Aorta (tissue), 5 donors: ENCODE measurements at regions of chr15 and their contacts with region 1.

Region 1: GRCh38 chr15:62389885-62390790 is 225.1 kb upstream of the C2CD4B start:
- DNase-seq: peak; percentile 81 to 91
- ATAC-seq: peak; percentile 92
- H3K4me3 ChIP-seq: peak within 1 kb of the TSS; percentile 55 to 85
- H3K27ac ChIP-seq: peak within 1 kb of the TSS; percentile 36 to 41
- H3K4me1 ChIP-seq: peaks cover 0 to 2% of the 10 kb centered on the region in 2 donors
- H3K27me3 ChIP-seq: no peaks in the 10 kb centered on the region

Region 2: GRCh38 chr15:62254137-62254934 is 135.8 kb before region 1 on chr15:
- intact Hi-C with region 1: no loop called
- DNase-seq: peak; percentile 65 to 87
- ATAC-seq: no peak
- H3K4me3 ChIP-seq: no peak overlapping the region
- H3K27ac ChIP-seq: no peak overlapping the region
- H3K4me1 ChIP-seq: no peaks in the 10 kb centered on the region
- H3K27me3 ChIP-seq: no peaks in the 10 kb centered on the region

Region 3: GRCh38 chr15:62469874-62470688 is 79.9 kb after region 1 on chr15:
- intact Hi-C with region 1: loop called in 1 of 2 experiments (anchors 5 kb)
- DNase-seq: peak; percentile 83 to 84
- ATAC-seq: peak; percentile 80
- H3K4me3 ChIP-seq: no peak overlapping the region
- H3K27ac ChIP-seq: peak overlapping the region; percentile 58 to 100
- H3K4me1 ChIP-seq: peaks cover 11 to 25% of the 10 kb centered on the region in 2 donors
- H3K27me3 ChIP-seq: no peaks in the 10 kb centered on the region

Region 4: DNA sequence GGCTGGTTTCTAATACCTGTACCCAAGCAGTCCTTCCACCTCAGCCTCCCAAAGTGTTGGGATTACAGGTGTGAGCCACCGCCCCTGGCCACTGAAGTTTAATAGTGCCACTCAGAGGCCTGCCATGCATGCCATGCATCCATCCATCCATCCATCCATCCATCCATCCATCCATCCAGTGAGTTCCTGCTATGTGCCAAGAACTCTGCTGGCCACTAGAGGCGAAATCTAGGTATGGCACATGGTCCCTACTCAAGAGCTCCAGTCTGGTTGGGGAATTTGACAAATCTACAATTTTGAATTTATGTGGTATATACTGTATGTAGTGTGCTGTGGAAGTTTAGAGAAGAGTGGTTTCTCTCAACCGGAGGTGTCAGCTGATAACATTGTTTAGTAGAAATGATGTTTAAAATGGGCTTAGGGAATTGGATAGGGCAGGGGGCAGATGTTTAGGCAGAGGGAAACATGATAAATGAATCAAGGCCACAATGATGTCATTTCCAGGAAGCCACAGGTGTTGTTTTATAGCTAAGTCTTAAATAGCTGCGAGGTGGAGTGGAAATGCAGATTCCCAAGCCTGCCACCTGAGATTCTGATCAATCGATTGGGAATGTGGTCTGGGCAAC is 159.3 kb after region 1 on chr15:
- intact Hi-C with region 1: loop called in 1 of 2 experiments (anchors 10 kb)
- DNase-seq: no peak
- ATAC-seq: no peak
- H3K4me3 ChIP-seq: no peak overlapping the region
- H3K27ac ChIP-seq: peak overlapping the region in 1 of 2 donors; percentile 64
- H3K4me1 ChIP-seq: peaks cover 8 to 19% of the 10 kb centered on the region in 2 donors
- H3K27me3 ChIP-seq: no peaks in the 10 kb centered on the region

Region 5: GRCh38 chr15:62649793-62650420 is 259.8 kb after region 1 on chr15:
- intact Hi-C with region 1: loop called (anchors 2 to 5 kb)
- DNase-seq: peak in 1 of 2 donors; percentile 76
- ATAC-seq: no peak
- H3K4me3 ChIP-seq: no peak overlapping the region
- H3K27ac ChIP-seq: no peak overlapping the region
- H3K4me1 ChIP-seq: peaks cover 0 to 2% of the 10 kb centered on the region in 2 donors
- H3K27me3 ChIP-seq: no peaks in the 10 kb centered on the region